ENCODE measurements at regions of chr12 and their contacts with region 1.

Region 1: GRCh38 chr12:121709478-121709961 is 3.0 kb upstream of the TMEM120B start:
- DNase-seq: no peak

Region 2: DNA sequence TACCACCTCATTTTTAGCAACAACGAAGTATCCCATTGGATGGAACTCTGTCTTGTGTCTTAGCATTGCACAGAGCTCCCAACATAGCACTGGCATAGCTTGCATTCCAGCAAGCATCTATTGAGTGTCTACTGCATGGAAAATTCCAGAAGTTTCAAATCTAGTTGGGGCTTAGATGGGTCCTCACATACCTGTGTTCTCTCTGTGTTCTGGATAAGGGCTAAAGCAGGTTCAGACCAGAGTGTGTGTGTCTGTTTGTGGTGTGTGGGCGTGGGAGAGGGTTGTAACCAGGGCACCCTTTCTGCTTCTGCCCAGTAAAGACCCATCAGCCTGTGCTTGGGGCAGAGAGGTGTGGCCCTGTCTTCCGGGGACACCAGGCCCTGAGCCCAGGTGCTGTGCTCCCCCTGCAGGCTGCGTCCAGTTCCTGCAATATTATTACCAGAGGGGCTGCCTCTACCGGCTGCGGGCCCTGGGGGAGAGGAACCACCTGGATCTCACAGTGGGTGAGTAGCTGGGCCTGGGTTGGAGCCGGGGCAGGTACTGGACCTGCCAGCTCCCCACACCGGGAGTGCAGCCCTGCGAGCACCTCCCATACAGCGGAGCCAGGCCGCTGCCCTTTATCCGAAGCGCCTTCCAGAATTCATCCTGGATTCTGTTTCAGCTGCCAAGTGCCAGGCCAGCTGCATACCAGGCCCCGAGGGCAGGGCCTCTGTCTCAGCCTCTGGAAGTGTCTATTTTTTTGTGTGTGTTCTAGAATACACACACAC is 63.7 kb after region 1 on chr12:
- intact Hi-C with region 1: loop called (anchors 5 to 10 kb)
- DNase-seq: peak; percentile 88

Region 3: DNA sequence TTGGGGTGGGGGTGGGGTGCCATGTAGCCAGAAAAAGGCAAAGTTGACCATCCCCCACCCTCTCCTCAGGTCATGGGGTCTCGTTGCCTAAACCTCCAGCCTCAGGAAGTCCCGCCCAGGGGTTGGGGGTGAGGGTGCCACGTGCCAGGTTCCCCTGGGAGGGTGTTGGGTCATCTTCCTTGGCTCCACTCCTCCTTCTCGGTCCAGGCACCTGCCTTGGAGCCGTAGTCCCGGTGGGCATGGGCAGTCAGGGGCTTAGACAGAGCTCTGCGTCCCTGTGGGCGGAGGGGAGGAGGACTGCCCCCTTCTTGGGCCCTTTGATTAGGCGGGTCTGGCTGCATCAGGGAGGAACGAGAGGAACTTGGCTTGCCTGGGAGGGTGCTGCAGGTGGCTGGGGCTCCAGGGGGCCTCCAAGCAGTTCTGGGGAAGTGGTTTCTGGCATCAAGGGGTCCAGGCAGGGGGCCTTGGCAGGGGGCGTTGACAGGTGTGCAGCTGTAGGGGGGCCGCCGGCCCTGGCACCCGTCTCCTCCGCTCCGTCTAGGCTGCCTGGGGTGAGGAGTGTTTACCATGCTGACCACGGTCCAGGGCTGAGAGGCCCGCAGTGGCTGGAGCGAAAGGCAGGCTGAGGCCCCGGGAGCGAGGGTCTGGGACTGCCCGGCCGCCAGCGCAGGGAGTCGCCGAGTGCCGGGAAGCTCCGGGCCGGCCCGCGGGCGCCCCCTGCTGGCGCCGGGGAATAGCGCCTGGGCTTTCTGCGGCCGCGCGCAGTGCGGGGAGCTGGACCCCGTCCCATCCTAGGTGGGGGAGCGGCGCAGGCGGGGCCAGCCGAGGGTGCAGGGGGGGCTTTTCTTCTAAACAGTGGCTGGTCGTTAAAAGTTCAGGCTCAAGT is 102.2 kb after region 1 on chr12:
- intact Hi-C with region 1: no loop called
- DNase-seq: peak; percentile 93

Measured in posterior vena cava (tissue), 2 donors.